Sigmoid colon (tissue), 7 donors: ENCODE measurements at regions of chr14 and their contacts with region 1.

Region 1: GRCh38 chr14:76050797-76051392 is 65.3 kb downstream of the IFT43 start:
- DNase-seq: no peak
- H3K4me3 ChIP-seq: no peak overlapping the region
- H3K27ac ChIP-seq: no peak overlapping the region
- H3K4me1 ChIP-seq: no peaks in the 10 kb centered on the region
- H3K27me3 ChIP-seq: no peaks in the 10 kb centered on the region
- CTCF ChIP-seq: peak; percentile 74 to 85 (median 76)
- EP300 ChIP-seq: no peak
- POLR2A ChIP-seq: no peak

Region 2: DNA sequence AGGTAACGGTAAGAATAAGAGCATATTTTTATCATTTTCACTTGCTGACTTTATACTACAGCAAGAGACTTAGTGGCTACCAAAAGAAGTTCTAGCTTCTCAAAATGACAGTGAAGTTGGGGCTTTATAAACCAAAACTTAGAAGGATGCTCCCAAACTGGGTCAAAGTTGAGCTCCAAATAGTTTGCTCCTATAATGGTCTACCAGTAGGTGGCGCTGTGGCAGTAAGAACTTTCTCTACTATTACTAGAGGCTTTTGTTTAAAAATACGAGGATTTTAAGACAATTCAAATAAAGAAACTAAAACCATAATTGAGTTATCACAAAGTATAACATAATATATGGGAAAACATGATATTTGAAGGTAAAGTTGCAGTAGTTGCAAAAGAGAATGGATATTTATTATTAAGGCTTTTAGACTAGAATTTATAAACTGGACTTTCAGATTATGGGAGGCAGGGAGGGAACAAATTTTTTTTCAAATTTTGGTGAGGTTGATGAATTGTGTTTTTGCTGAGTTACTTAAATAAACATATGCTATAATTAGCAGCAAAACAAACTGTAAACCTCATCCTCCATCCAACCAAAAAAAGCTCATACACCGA is 144.1 kb before region 1 on chr14:
- intact Hi-C with region 1: no loop called
- DNase-seq: peak; percentile 81
- H3K4me3 ChIP-seq: no peak overlapping the region
- H3K27ac ChIP-seq: peak overlapping the region in 1 of 4 donors; percentile 30
- H3K4me1 ChIP-seq: peaks cover 0 to 13% (median 3%) of the 10 kb centered on the region in 4 donors
- H3K27me3 ChIP-seq: no peaks in the 10 kb centered on the region
- CTCF ChIP-seq: peak; percentile 54 to 90 (median 72)
- EP300 ChIP-seq: no peak
- POLR2A ChIP-seq: no peak

Region 3: DNA sequence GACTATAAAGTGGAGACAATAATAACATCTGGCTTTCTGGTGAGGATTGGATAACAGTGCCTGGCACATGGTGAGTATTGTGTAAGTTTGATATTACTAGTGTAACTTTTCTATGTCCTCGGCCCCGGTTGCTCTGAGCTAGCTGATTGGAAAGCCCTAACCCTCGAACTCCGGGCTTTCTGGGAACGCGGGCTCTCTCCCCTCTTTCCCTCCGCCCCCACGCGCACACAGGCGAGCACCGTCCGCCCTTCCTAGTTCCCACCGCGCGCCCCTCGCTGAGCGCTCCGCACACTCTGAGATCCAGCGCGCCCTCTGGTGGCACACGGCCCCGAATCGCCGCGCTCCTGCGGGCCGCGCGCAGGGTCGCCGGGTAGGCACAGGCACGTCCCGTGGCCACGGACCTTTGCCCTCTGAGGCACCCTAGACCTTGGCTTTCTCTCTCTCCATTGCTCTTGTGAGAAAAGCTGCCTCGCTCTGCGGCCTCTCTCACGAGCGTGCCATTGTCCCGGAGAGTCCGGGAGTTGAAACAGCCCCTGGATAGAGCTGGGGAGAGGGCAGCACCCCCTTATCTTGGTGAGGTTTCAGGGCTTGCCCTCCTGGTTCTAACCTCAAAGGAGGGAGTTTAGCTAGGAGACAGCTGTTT is 301.9 kb after region 1 on chr14:
- intact Hi-C with region 1: loop called (anchors 1 kb)
- DNase-seq: no peak
- H3K4me3 ChIP-seq: peak overlapping the region in 3 of 4 donors; percentile 28 to 41 (median 30)
- H3K27ac ChIP-seq: no peak overlapping the region
- H3K4me1 ChIP-seq: peaks cover 0 to 10% (median 6%) of the 10 kb centered on the region in 4 donors
- H3K27me3 ChIP-seq: peaks cover 0 to 7% (median 4%) of the 10 kb centered on the region in 3 donors
- CTCF ChIP-seq: peak; percentile 66 to 87 (median 74)
- EP300 ChIP-seq: no peak
- POLR2A ChIP-seq: no peak

Region 4: GRCh38 chr14:76386915-76387782 is 336.3 kb after region 1 on chr14:
- intact Hi-C with region 1: loop called (anchors 2 kb)
- DNase-seq: no peak
- H3K4me3 ChIP-seq: no peak overlapping the region
- H3K27ac ChIP-seq: no peak overlapping the region
- H3K4me1 ChIP-seq: no peaks in the 10 kb centered on the region
- H3K27me3 ChIP-seq: peaks cover 0 to 50% (median 7%) of the 10 kb centered on the region in 3 donors
- CTCF ChIP-seq: peak; percentile 57 to 90 (median 72)
- EP300 ChIP-seq: no peak
- POLR2A ChIP-seq: no peak